ENCODE measurements at regions of chr18 and their contacts with region 1.

Region 1: DNA sequence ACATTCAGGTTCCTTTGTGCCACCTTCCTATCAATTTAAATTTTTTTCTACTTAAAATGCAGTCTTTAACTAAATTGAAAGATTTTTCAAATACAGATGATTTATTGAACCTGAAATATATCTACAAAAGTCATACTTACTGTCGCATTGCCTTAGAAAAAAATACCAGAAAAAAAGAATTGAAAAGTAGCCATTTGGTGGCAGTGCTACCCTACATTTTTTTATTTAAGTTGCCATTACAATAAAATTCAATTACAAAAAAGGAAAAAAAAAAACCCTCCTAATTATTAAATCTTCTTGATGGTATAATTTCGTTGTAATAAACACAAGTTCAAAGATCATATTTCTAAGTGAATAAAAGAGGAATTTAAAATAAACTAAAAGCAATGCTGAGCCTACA is 43.4 kb downstream of the DSC3 start:
- DNase-seq: no peak
- ATAC-seq: no peak
- H3K4me3 Mint-ChIP-seq: no peak overlapping the region
- H3K27ac Mint-ChIP-seq: no peak overlapping the region
- H3K4me1 Mint-ChIP-seq: no peaks in the 10 kb centered on the region
- H3K27me3 Mint-ChIP-seq: no peaks in the 10 kb centered on the region
- CTCF ChIP-seq: no peak

Region 2: GRCh38 chr18:30945761-30946160 is 53.4 kb before region 1 on chr18:
- CTCF ChIA-PET with region 1: no interaction called
- POLR2A ChIA-PET with region 1: no interaction called
- intact Hi-C with region 1: loop called (anchors 5 kb)
- DNase-seq: no peak
- ATAC-seq: no peak
- H3K4me3 Mint-ChIP-seq: no peak overlapping the region
- H3K27ac Mint-ChIP-seq: no peak overlapping the region
- H3K4me1 Mint-ChIP-seq: no peaks in the 10 kb centered on the region
- H3K27me3 Mint-ChIP-seq: no peaks in the 10 kb centered on the region
- CTCF ChIP-seq: no peak

Region 3: DNA sequence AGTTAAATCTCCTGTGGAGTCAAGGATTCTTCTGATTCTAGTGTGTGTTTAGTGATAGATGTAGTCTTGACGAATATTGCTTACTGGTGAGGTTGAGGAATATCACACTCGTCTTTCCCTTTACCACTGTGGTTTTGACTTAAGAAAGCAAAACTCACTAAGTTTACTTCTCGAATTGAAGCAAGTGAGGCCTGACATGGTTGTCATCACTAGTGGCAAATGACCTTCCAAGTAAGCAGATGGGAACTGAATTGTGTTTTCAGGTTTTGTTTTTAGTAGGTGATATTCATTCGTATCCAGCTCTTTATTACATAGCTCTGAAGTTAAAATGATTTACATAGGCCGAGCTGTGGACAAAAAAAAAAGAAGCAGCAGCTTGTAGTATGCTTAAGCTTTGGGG is 356.8 kb after region 1 on chr18:
- CTCF ChIA-PET with region 1: no interaction called
- POLR2A ChIA-PET with region 1: no interaction called
- intact Hi-C with region 1: no loop called
- DNase-seq: no peak
- ATAC-seq: no peak
- H3K4me3 Mint-ChIP-seq: no peak overlapping the region
- H3K27ac Mint-ChIP-seq: no peak overlapping the region
- H3K4me1 Mint-ChIP-seq: no peaks in the 10 kb centered on the region
- H3K27me3 Mint-ChIP-seq: no peaks in the 10 kb centered on the region
- CTCF ChIP-seq: no peak

Measured in activated B cell treated with CpG ODN at 0.5 μM for 24 hours (primary cell).